Motor neuron (in vitro differentiated cells): ENCODE measurements at regions of chr12 and their contacts with region 1.

Region 1: DNA sequence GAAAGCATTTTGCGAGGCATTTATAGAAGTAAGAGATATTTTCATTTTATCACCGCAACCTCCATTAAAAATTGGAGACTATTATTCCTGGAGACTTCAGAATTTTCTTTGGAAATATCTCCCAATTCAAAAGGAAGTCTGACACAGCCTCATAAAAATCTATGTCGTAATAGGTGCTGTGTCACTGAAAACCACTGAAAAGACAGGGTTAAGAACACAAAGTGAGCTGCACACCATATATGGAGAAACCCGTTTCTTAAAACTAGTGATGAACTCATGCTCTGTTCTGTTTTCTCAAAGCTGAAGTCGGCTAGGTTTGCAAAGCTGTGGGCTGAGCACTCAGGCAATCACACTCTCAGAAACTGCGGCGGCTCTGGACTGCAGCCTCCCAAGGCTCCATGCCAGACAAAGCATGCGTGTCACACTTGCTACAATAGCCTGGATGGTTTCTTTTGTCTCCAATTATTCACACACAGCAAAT is at the start of gene GLIPR1:
- ATAC-seq: peak; percentile 40 to 97 (median 84)
- H3K4me3 ChIP-seq: peak within 1 kb of the TSS in 1 of 5 donors; percentile 4
- H3K27ac ChIP-seq: no peak within 1 kb of the TSS
- H3K4me1 ChIP-seq: no peaks in the 10 kb centered on the region
- total RNA-seq, gene GLIPR1: 1.1 to 26.1 (median 3.3) TPM

Region 2: DNA sequence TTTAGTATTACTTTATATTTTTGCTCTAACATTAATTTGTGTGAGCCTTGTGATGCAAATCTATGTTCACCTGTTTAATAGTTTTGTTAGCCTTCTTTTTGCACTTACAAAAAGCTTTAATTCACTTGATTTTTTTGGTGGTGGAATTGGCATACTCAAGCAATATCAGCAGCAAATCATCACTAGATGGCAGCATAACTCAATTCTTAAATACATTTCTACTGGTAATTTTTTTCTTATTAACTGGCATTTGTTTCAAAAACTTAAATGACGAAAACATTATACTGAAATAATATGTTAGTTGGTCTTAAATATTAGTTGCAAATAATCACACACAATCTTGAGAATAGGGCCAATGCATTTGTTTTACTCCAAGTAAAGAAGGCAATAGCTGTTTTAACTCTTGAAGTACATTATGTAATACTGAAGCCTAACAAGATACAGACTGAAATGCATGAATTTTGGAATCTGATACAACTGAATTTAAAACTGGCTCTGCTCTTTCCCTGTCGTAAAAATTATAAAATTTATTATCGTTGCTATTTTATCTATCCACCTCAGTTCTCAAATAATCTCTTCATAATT is 791.3 kb before region 1 on chr12:
- in situ Hi-C with region 1: loop called in 1 of 9 experiments (anchors 25 kb)
- ATAC-seq: peak in 3 of 8 experiments; percentile 17 to 32 (median 26)
- H3K4me3 ChIP-seq: no peak overlapping the region
- H3K27ac ChIP-seq: no peak overlapping the region
- H3K4me1 ChIP-seq: peaks cover 0 to 4% of the 10 kb centered on the region in 2 donors